Posterior vena cava (tissue), 2 donors: ENCODE measurements at regions of chr14 and their contacts with region 1.

Region 1: GRCh38 chr14:37515771-37516170 is 79.3 kb downstream of the FOXA1 start:
- DNase-seq: no peak

Region 2: GRCh38 chr14:35789651-35790050 is 1726.1 kb before region 1 on chr14:
- intact Hi-C with region 1: loop called in 1 of 2 experiments (anchors 10 kb)
- DNase-seq: no peak

Region 3: DNA sequence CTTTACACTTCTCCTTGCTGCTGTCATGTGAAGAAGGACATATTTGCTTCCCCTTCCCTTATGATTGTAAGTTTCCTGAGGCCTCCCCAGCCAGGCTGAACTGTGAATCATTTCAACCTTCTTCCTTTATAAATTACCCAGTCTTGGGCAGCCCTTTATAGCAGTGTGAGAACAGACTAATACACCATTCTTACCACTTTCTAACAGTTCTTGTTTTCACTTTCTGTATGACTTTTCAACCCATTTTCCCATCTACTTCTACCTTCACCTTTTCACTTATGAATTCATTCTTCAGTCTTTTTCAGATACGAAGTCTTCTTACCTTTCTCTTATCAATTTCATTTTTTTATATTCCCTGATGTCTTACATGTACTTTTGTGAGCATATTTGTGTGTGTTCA is 24.2 kb after region 1 on chr14:
- intact Hi-C with region 1: no loop called
- DNase-seq: no peak